Activated CD4-positive, alpha-beta memory T cell treated with anti-CD3 and anti-CD28 coated beads, Interleukin-2, amount 10 ng/mL, durations not matched to agents 7 days and 5 days (primary cell): ENCODE measurements at regions of chr11 and their contacts with region 1.

Region 1: GRCh38 chr11:3854977-3855807 is at the start of gene STIM1:
- DNase-seq: peak; percentile 98
- H3K4me3 Mint-ChIP-seq: peak within 1 kb of the TSS; percentile 97
- H3K27ac Mint-ChIP-seq: peak within 1 kb of the TSS; percentile 100
- H3K4me1 Mint-ChIP-seq: peaks cover 56% of the 10 kb centered on the region
- H3K27me3 Mint-ChIP-seq: no peaks in the 10 kb centered on the region
- total RNA-seq, gene STIM1: 111 to 113 TPM

Region 2: GRCh38 chr11:3797329-3798095 is 57.7 kb before region 1 on chr11 and contains the start of gene NUP98:
- CTCF ChIA-PET with region 1: interaction called, 8 read pairs
- POLR2A ChIA-PET with region 1: interaction called, 15 read pairs
- DNase-seq: peak; percentile 100
- H3K4me3 Mint-ChIP-seq: peak within 1 kb of the TSS; percentile 93
- H3K27ac Mint-ChIP-seq: peak within 1 kb of the TSS; percentile 92
- H3K4me1 Mint-ChIP-seq: peaks cover 51% of the 10 kb centered on the region
- H3K27me3 Mint-ChIP-seq: no peaks in the 10 kb centered on the region
- total RNA-seq, gene NUP98: 93.9 to 95.2 TPM

Region 3: GRCh38 chr11:3867209-3868091 is 12.3 kb after region 1 on chr11:
- CTCF ChIA-PET with region 1: interaction called, 222 read pairs
- POLR2A ChIA-PET with region 1: interaction called, 174 read pairs
- DNase-seq: no peak
- H3K4me3 Mint-ChIP-seq: no peak overlapping the region
- H3K27ac Mint-ChIP-seq: peak overlapping the region; percentile 50
- H3K4me1 Mint-ChIP-seq: peaks cover 81% of the 10 kb centered on the region
- H3K27me3 Mint-ChIP-seq: no peaks in the 10 kb centered on the region

Region 4: DNA sequence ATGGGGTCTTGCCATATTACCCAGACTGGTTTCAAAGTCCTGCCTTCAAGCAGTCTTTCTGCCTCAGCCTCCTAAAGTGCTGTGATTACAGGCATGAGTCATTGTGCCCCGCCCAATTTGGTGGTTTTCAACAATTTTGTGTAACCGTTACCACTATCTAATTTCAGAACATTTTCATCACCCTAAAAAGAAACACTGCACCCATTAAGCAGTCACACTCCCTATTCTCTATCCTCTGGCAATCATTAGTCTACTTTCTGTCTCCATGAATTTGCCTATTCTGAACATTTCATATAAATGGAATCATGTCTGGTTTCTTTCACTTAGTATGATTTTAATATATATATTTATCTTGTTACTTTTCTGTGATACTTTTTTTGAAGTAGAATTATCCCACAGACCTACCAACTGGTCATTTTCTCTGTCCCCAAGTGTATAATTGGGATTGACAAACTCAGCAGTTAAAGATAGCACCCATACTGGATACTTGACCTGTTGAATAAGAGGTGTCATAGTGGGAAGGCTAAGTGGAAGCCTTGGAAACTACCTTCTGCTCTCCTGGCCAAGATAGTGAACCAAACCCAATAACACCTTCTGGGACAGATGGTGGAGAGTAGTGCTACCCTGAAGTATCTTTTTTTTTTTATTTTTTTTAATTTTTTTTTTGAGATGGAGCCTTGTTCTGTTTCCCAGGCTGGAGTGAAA is 65.1 kb after region 1 on chr11:
- CTCF ChIA-PET with region 1: interaction called, 10 read pairs
- POLR2A ChIA-PET with region 1: interaction called, 21 read pairs
- DNase-seq: peak; percentile 84
- H3K4me3 Mint-ChIP-seq: peak overlapping the region; percentile 22
- H3K27ac Mint-ChIP-seq: peak overlapping the region; percentile 89
- H3K4me1 Mint-ChIP-seq: peaks cover 64% of the 10 kb centered on the region
- H3K27me3 Mint-ChIP-seq: no peaks in the 10 kb centered on the region

Region 5: DNA sequence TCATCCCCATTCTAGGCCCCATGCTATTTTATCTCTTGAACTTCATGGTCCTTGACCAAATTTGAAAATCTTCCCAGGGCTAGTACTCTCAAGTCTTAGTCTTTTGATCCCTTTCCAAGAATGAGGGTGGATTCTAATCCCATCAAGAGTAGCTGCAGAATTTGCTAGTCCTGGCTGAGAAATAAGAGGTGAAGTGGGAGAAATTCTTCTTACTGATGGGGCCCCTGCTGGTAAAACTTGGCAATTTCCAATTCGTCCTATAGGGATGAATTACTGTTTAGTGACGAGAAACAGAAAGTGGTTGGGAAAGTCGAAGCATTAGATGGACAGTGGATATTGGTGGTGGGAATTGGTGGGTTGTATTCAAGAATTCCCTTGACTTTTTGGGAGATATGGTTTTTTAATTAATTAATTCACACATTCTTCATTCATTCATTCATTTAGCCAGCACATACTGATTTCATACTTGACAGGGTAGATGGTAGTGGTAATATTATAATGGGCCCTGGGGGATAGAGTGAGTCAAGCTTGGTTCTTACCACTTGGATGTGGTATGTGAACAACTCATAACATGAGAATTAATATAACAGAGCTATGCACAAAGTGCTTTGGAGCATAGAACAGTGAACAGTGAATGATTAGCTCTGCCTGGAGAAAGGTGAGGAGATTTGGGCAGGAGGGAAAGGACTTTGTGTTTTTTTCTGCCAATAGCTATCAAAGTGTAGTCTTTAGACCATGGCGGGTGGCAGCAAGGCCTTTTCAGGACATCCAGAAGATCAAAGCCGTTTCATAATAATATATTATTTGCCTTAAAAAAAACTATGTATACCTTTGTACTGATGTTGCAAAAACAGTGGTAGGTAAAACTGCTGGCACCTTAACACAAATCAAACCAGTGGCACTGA is 104.1 kb after region 1 on chr11:
- CTCF ChIA-PET with region 1: interaction called, 36 read pairs
- POLR2A ChIA-PET with region 1: interaction called, 27 read pairs
- DNase-seq: no peak
- H3K4me3 Mint-ChIP-seq: no peak overlapping the region
- H3K27ac Mint-ChIP-seq: no peak overlapping the region
- H3K4me1 Mint-ChIP-seq: peaks cover 63% of the 10 kb centered on the region
- H3K27me3 Mint-ChIP-seq: no peaks in the 10 kb centered on the region

Region 6: DNA sequence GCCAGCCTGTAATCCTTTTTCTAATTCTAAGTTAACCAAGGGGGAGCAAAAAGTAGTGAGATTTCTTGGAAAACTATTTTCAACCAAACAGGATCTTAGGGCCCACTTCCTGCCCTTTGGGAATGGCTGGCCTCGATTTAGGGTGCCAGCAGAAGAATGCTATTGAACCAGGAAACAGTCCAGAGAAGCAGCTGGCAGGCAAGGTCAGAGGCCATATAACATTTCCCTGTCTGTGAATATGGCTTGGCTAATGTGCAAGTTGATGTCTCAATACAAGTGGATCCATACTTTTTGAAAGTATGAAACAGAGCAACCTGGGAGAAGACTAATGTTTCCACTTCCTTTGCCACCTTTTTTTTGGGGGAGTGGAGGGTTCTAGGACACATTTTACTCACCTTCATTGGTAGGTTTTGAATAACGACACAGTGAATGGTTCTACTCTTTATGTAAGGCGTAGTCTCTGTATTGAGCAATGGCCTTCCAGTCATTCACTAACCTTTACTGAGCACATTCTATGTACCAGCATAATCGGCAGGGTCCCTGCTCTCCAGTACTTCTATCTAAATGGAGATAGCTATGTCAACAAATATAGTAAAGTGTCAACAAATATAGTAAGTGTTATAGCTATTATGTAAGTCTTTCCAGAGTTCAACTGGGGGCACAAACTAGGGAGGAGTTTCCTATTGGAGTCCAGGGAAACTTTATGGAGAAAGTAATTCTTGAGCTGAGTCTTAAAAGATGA is 205.2 kb after region 1 on chr11:
- CTCF ChIA-PET with region 1: interaction called, 554 read pairs
- POLR2A ChIA-PET with region 1: interaction called, 26 read pairs
- DNase-seq: no peak
- H3K4me3 Mint-ChIP-seq: no peak overlapping the region
- H3K27ac Mint-ChIP-seq: no peak overlapping the region
- H3K4me1 Mint-ChIP-seq: peaks cover 25% of the 10 kb centered on the region
- H3K27me3 Mint-ChIP-seq: no peaks in the 10 kb centered on the region

Region 7: GRCh38 chr11:4094348-4095291 is 239.4 kb after region 1 on chr11 and contains the start of gene RRM1:
- CTCF ChIA-PET with region 1: interaction called, 19 read pairs
- POLR2A ChIA-PET with region 1: interaction called, 79 read pairs
- DNase-seq: peak; percentile 94
- H3K4me3 Mint-ChIP-seq: peak within 1 kb of the TSS; percentile 99
- H3K27ac Mint-ChIP-seq: peak within 1 kb of the TSS; percentile 97
- H3K4me1 Mint-ChIP-seq: peaks cover 79% of the 10 kb centered on the region
- H3K27me3 Mint-ChIP-seq: no peaks in the 10 kb centered on the region
- total RNA-seq, gene RRM1: 156 to 161 TPM